Activated T-helper 2 cell treated with anti-CD3 and anti-CD28 coated beads, Interferon-gamma antibody, Interleukin-2, Interleukin-4, amounts not matched to agents 10 μg/mL and 5 μg/mL and 100 μg/mL, durations not matched to agents 14 hours and 24 hours and 36 hours (primary cell): ENCODE measurements at regions of chr19 and their contacts with region 1.

Region 1: DNA sequence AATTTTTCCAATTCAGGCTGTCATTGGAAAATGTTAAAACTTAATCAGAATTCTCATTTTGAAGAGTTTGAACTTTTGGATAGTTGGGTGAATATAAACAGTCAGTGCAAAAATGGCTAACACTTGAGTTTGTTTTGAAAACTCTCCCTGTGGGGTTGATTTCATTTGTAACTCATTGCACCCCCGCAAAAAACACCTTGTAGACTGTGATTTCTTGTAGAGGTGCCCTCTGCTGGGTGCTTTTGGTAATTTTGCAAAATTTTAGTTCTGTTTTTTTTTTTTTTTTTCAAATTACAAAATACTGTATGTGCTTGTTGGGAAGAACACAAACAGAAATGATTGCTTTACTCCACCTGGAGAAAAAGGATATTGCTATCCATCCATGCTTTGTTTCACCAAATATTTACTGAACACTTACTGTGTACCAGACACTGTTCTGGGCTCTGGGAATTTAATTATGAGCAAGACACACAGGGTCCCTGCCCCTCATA is 28.2 kb upstream of the GPI start:
- DNase-seq: no peak
- H3K4me3 Mint-ChIP-seq: no peak overlapping the region
- H3K27ac Mint-ChIP-seq: no peak overlapping the region
- H3K4me1 Mint-ChIP-seq: peaks cover 6% of the 10 kb centered on the region
- H3K27me3 Mint-ChIP-seq: no peaks in the 10 kb centered on the region

Region 2: DNA sequence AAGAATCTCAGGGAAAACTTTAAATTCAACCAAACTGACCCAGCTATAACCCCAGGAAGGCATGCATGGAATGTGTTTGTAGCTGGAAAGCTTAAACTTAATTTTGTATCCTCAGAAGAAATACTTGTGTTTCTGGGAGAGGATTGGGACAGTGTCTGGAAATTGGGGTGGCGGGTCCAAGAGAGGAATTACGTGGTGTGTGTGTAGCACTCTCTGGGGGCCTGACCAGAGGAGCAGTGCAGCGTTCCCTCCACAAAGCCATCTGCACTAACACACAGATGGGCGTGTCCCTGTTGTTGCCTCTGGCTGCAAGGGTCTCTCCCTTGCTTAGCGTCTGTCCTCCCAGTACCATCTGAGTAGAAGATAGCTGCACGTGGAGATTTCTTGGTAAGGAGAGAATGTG is 76.1 kb before region 1 on chr19:
- intact Hi-C with region 1: loop called (anchors 2 kb)
- DNase-seq: no peak
- H3K4me3 Mint-ChIP-seq: no peak overlapping the region
- H3K27ac Mint-ChIP-seq: no peak overlapping the region
- H3K4me1 Mint-ChIP-seq: peaks cover 3% of the 10 kb centered on the region
- H3K27me3 Mint-ChIP-seq: peaks cover 2% of the 10 kb centered on the region